ENCODE measurements at regions of chr4 and their contacts with region 1.

Region 1: GRCh38 chr4:147707865-147708672 is 23.8 kb upstream of the ARHGAP10 start:
- DNase-seq: peak; percentile 36 to 65 (median 47)
- H3K4me3 ChIP-seq: no peak overlapping the region
- H3K4me3 Mint-ChIP-seq: no peak overlapping the region
- H3K27ac ChIP-seq: no peak overlapping the region
- H3K27ac Mint-ChIP-seq: no peak overlapping the region
- H3K4me1 ChIP-seq: no peaks in the 10 kb centered on the region
- H3K4me1 Mint-ChIP-seq: peaks cover 0 to 5% (median 4%) of the 10 kb centered on the region in 3 donors
- H3K27me3 ChIP-seq: no peaks in the 10 kb centered on the region
- H3K27me3 Mint-ChIP-seq: no peaks in the 10 kb centered on the region

Region 2: GRCh38 chr4:147731580-147732517 is 23.8 kb after region 1 on chr4 and contains the start of gene ARHGAP10:
- CTCF ChIA-PET with region 1: interaction called, 13 read pairs
- POLR2A ChIA-PET with region 1: no interaction called
- DNase-seq: peak; percentile 55 to 76 (median 61)
- H3K4me3 ChIP-seq: peak within 1 kb of the TSS; percentile 72
- H3K4me3 Mint-ChIP-seq: peak within 1 kb of the TSS; percentile 84 to 98 (median 93)
- H3K27ac ChIP-seq: peak within 1 kb of the TSS; percentile 47
- H3K27ac Mint-ChIP-seq: peak within 1 kb of the TSS; percentile 89 to 96 (median 93)
- H3K4me1 ChIP-seq: peaks cover 23% of the 10 kb centered on the region
- H3K4me1 Mint-ChIP-seq: peaks cover 40 to 50% (median 47%) of the 10 kb centered on the region in 3 donors
- H3K27me3 ChIP-seq: no peaks in the 10 kb centered on the region
- H3K27me3 Mint-ChIP-seq: no peaks in the 10 kb centered on the region
- total RNA-seq, gene ARHGAP10: 8.6 to 9.7 TPM

Region 3: DNA sequence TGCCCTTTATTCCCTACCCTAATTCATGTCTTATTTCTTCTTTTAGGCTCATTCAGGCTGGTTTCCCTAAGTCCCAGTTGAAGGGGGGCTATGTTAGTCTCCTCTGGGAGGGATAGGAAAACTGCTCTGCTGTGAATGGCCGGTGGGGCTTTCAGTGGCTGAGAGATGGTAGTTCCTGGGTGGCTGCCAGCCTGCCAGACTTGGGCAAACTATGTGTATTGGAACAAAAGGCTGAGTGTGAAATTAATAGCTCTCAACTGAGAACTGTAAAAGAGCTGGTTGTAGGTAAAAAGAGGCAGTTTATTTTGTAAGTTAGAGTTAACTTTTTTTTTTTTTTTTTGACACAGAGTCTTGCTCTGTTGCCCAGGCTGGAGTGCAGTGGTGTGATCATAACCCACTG is 52.6 kb after region 1 on chr4:
- CTCF ChIA-PET with region 1: no interaction called
- POLR2A ChIA-PET with region 1: no interaction called
- DNase-seq: no peak
- H3K4me3 ChIP-seq: no peak overlapping the region
- H3K4me3 Mint-ChIP-seq: no peak overlapping the region
- H3K27ac ChIP-seq: no peak overlapping the region
- H3K27ac Mint-ChIP-seq: peak overlapping the region in 2 of 8 donors; percentile 22 to 93
- H3K4me1 ChIP-seq: no peaks in the 10 kb centered on the region
- H3K4me1 Mint-ChIP-seq: peaks cover 10 to 11% (median 10%) of the 10 kb centered on the region in 3 donors
- H3K27me3 ChIP-seq: no peaks in the 10 kb centered on the region
- H3K27me3 Mint-ChIP-seq: no peaks in the 10 kb centered on the region

Region 4: GRCh38 chr4:147969573-147970385 is 261.7 kb after region 1 on chr4:
- CTCF ChIA-PET with region 1: no interaction called
- POLR2A ChIA-PET with region 1: no interaction called
- DNase-seq: no peak
- H3K4me3 ChIP-seq: no peak overlapping the region
- H3K4me3 Mint-ChIP-seq: no peak overlapping the region
- H3K27ac ChIP-seq: no peak overlapping the region
- H3K27ac Mint-ChIP-seq: peak overlapping the region in 1 of 8 donors; percentile 44
- H3K4me1 ChIP-seq: no peaks in the 10 kb centered on the region
- H3K4me1 Mint-ChIP-seq: peaks cover 0 to 3% (median 0%) of the 10 kb centered on the region in 3 donors
- H3K27me3 ChIP-seq: no peaks in the 10 kb centered on the region
- H3K27me3 Mint-ChIP-seq: no peaks in the 10 kb centered on the region